ENCODE measurements at regions of chr2 and their contacts with region 1.

Region 1: DNA sequence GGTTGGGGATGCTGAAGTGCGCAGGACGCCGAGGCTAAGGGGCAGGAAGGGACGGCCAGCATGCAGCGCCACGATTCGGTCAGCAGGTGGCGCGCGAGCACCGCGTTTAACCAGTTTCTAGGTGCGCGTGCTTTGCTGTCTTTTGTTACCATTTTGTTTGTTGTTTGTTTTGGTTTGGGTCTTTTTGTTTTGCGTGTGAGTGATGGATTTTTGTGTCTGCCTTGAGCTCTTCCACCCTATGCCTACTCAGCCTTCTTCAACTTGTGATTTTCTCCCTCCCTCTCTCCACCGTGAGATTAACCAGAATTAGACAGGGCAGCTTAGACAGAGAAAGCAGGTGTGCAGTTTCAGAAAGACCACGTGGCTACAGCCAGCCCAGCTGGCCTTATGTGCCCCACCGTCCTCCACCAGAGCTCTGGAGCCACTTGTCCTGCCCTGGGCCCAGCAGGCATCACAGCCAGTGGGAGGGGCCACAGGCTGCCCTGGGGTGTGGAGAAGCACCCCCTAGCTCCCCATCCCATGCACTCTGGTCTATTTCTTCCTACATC is 180.2 kb downstream of the RNF144A start:
- DNase-seq: peak; percentile 82
- H3K4me3 Mint-ChIP-seq: no peak overlapping the region
- H3K27ac Mint-ChIP-seq: no peak overlapping the region
- H3K4me1 Mint-ChIP-seq: peaks cover 7% of the 10 kb centered on the region
- H3K27me3 Mint-ChIP-seq: no peaks in the 10 kb centered on the region

Region 2: DNA sequence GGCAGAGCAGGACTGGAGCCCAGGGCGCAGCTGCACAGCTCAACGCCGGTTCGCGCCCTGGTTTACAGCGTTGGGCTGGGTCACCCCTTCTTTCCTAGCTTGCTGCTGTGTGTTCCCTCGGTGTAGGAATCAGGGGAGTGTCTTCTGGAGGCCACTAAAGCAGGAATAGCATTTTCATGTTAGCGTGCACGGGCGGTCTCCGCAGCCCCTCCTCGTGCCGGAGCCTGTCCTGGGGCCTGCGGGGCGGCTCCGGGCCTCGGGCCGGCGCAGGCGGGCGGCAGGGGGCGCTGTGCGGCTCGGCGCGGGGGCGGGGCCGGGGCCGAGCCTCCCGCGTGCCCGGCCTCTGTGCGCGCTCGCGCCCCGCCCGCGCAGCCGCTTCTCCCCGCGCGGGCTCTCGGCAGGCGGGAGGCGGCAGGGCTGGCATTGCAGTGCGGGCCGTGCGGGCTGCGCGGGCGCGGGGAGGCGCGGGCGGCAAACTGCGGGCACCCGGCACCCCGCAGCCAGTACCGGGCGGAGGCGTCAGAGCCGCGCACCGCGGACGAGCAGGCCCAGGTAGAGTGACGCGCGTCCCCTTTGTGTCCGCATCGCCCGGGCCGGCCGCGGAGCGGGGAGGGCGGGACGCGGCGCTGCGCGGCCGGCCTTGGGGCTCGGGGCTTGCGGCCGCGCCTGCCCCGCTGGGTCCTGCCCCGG is 180.2 kb before region 1 on chr2 and contains the start of gene RNF144A:
- CTCF ChIA-PET with region 1: no interaction called
- POLR2A ChIA-PET with region 1: no interaction called
- intact Hi-C with region 1: no loop called
- DNase-seq: peak; percentile 78
- H3K4me3 Mint-ChIP-seq: peak within 1 kb of the TSS; percentile 69
- H3K27ac Mint-ChIP-seq: peak within 1 kb of the TSS; percentile 67
- H3K4me1 Mint-ChIP-seq: peaks cover 66% of the 10 kb centered on the region
- H3K27me3 Mint-ChIP-seq: no peaks in the 10 kb centered on the region
- total RNA-seq, gene RNF144A: 21.4 to 22.7 TPM

Region 3: DNA sequence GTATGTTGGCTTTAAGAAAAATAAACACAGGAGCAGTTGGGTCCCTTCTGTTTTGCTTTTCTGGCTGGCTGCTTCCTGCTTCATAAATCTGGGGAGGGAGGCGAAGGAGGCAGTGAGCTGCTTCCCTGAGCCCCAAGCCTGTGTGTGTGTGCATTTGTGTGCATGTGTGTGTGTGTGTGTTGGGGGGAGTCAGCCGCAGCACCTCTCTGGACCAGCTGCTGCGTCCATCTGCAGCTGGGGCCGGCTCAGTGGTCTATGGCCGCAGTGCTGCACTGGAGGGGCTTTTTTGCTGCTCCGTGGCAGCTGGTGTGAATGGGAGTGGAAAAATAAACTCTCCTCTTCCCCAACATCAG is 12.1 kb after region 1 on chr2:
- CTCF ChIA-PET with region 1: interaction called, 14 read pairs
- POLR2A ChIA-PET with region 1: no interaction called
- intact Hi-C with region 1: no loop called
- DNase-seq: no peak
- H3K4me3 Mint-ChIP-seq: no peak overlapping the region
- H3K27ac Mint-ChIP-seq: no peak overlapping the region
- H3K4me1 Mint-ChIP-seq: no peaks in the 10 kb centered on the region
- H3K27me3 Mint-ChIP-seq: no peaks in the 10 kb centered on the region

Measured in activated CD4-positive, alpha-beta memory T cell treated with anti-CD3 and anti-CD28 coated beads for 36 hours (primary cell).